Left cardiac atrium (tissue), 4 donors: ENCODE measurements at regions of chr3 and their contacts with region 1.

Region 1: GRCh38 chr3:133821767-133822638 is 16.4 kb downstream of the SRPRB start:
- DNase-seq: peak; percentile 88
- ATAC-seq: peak in 1 of 2 donors; percentile 54

Region 2: GRCh38 chr3:133895208-133896001 is 73.4 kb after region 1 on chr3 and contains the start of gene RAB6B:
- intact Hi-C with region 1: loop called (anchors 5 to 10 kb)
- DNase-seq: peak; percentile 54
- ATAC-seq: peak; percentile 87 to 90
- total RNA-seq, gene RAB6B: 41.4 to 41.6 TPM

Region 3: GRCh38 chr3:133901083-133901482 is 79.1 kb after region 1 on chr3:
- intact Hi-C with region 1: loop called (anchors 5 to 10 kb)
- DNase-seq: no peak
- ATAC-seq: peak in 1 of 2 donors; percentile 38

Region 4: GRCh38 chr3:134473868-134474546 is 652.0 kb after region 1 on chr3:
- intact Hi-C with region 1: no loop called
- DNase-seq: peak; percentile 74
- ATAC-seq: peak; percentile 35 to 65